ENCODE measurements at regions of chr10 and their contacts with region 1.

Region 1: DNA sequence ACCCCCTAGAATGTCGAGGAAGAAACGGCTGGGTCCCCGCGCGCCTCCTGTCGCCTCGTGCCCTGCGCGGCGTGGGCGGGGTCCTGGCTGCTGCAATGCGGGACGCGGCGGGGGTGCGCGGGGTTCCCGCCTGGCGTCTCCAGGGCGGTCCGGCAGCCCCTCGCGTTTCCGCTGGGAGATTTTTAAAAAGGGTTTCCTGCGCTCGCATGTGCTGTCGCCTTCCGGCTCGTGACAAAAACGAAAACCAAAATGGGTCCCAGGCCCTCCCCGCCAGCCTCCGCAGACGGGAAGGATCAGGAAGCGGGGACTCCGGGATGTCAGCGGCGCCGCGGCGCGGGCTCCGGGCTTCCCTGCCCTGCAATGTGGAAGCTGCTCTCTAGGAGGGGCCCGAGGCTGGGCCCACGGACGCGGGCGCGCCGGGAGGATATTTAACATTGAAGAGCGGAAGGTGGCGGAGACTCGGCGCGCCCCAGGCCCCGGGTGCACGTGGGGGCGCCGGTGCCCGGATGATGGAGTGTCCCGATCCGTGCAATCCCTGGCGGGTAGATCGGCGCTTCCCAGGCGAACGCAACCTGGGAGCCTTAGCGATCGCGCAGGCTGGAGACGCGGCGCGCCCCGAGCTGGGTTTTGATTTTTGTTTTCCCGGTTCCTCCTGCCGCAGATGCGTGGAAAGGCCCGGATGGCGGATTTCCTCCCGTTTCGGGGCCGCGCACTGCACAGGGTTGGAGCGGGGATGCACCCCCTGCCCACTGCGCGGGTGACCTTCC is 1.0 kb downstream of the PFKP start:
- DNase-seq: peak; percentile 54
- ATAC-seq: peak; percentile 24
- H3K4me3 ChIP-seq: peak overlapping the region; percentile 100
- H3K27ac ChIP-seq: peak overlapping the region; percentile 94
- H3K4me1 ChIP-seq: peaks cover 21% of the 10 kb centered on the region
- H3K27me3 ChIP-seq: no peaks in the 10 kb centered on the region
- CTCF ChIP-seq: peak; percentile 36
- POLR2A ChIP-seq: no peak
- RAD21 ChIP-seq: peak; percentile 33

Region 2: DNA sequence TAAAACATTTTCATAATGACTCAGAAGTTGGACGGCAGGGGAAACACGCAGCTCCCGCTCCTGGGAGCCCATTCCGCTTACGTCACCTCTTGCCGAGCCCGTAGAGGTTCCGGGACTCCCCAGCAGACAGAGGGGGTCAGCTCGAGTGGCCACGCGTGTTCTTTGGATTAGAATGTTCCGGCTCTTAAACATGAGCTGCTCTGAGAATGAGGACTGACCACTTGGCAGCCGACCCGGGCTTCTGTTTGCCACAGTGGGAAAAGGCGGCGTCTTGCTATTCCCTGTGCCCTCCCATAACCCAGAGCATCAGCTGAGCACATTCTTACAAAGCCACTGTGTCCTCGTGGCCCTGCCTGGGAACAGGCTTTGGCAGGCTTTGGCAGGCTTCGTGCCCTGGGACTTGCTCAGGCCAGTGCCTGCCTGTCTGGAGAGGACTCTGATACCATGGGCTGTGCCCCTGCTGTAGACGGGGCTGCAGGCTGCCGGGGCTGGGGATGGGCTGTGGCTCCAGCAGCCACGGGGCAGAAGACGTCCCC is 39.1 kb after region 1 on chr10:
- CTCF ChIA-PET with region 1: no interaction called
- POLR2A ChIA-PET with region 1: no interaction called
- dilution Hi-C with region 1: no loop called
- in situ Hi-C with region 1: no loop called
- intact Hi-C with region 1: loop called (anchors 1 kb)
- DNase-seq: peak; percentile 98
- ATAC-seq: peak; percentile 90
- H3K4me3 ChIP-seq: no peak overlapping the region
- H3K27ac ChIP-seq: peak overlapping the region; percentile 77
- H3K4me1 ChIP-seq: peaks cover 11% of the 10 kb centered on the region
- H3K27me3 ChIP-seq: no peaks in the 10 kb centered on the region
- CTCF ChIP-seq: no peak
- POLR2A ChIP-seq: 0 out of 2 replicates have a peak, but pooled peaks have one; percentile 16
- RAD21 ChIP-seq: no peak